ENCODE measurements at regions of chr17 and their contacts with region 1.

Region 1: DNA sequence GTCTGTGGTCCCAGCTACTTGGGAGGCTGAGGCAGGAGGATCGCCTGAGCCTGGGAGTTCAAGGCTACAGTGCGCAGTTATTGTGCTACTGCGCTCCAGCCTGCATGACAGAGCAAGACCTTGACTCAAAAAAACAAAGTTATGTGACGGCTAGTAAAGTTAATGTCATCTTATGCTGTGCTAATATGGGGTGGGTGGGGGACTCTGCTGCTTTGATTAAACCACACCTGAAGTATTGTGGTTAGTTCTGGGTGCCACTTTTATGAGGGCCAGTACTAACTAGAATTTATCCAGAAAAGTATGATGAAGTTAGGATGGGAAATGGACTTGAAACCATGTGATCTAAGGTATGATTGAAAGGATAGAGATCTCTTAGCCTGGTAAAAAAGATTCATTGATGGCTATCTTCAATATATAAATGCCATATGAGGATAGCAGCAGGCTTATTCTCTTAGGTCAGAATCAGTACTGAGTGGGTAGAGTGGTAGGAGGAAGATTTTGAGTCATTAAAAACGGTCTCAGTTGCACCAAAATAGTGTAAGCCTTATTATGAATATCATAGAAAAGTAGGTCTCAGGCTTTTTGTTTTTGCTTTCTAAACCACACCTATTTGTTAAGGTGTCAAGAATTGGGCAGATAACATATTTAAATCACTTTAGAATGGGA is 5.6 kb downstream of the WSB1 start:
- DNase-seq: no peak
- ATAC-seq: peak; percentile 11
- H3K4me3 Mint-ChIP-seq: no peak overlapping the region
- H3K27ac Mint-ChIP-seq: peak overlapping the region; percentile 9
- H3K4me1 Mint-ChIP-seq: peaks cover 52% of the 10 kb centered on the region
- H3K27me3 Mint-ChIP-seq: no peaks in the 10 kb centered on the region

Region 2: DNA sequence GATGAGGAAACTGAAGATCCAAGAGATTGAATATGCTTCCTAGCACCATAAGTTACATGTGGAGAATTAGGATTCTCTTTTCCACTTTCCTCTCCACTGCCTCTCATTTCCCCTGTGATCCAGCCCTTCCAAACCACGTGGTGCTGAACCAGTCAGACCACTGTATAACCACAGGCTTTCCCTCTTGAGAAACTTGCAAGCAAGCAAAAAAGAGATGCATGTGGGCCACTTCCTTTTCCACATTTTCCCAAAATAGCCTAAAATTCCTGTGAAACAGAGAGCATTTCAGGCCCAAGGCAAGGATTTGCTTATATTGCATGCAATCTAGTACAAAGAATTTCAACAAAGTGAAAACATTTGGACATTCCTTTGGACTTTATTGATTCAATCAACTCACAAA is 97.4 kb after region 1 on chr17:
- CTCF ChIA-PET with region 1: no interaction called
- POLR2A ChIA-PET with region 1: no interaction called
- intact Hi-C with region 1: no loop called
- DNase-seq: no peak
- ATAC-seq: no peak
- H3K4me3 Mint-ChIP-seq: no peak overlapping the region
- H3K27ac Mint-ChIP-seq: no peak overlapping the region
- H3K4me1 Mint-ChIP-seq: no peaks in the 10 kb centered on the region
- H3K27me3 Mint-ChIP-seq: peaks cover 17% of the 10 kb centered on the region

Region 3: GRCh38 chr17:27408891-27409290 is 109.4 kb after region 1 on chr17:
- CTCF ChIA-PET with region 1: no interaction called
- POLR2A ChIA-PET with region 1: no interaction called
- intact Hi-C with region 1: no loop called
- DNase-seq: no peak
- ATAC-seq: no peak
- H3K4me3 Mint-ChIP-seq: no peak overlapping the region
- H3K27ac Mint-ChIP-seq: no peak overlapping the region
- H3K4me1 Mint-ChIP-seq: no peaks in the 10 kb centered on the region
- H3K27me3 Mint-ChIP-seq: peaks cover 2% of the 10 kb centered on the region

Region 4: GRCh38 chr17:27609611-27610303 is 310.2 kb after region 1 on chr17:
- CTCF ChIA-PET with region 1: no interaction called
- POLR2A ChIA-PET with region 1: no interaction called
- intact Hi-C with region 1: loop called in 1 of 2 experiments (anchors 2 kb)
- DNase-seq: peak; percentile 47
- ATAC-seq: no peak
- H3K4me3 Mint-ChIP-seq: no peak overlapping the region
- H3K27ac Mint-ChIP-seq: no peak overlapping the region
- H3K4me1 Mint-ChIP-seq: peaks cover 21% of the 10 kb centered on the region
- H3K27me3 Mint-ChIP-seq: no peaks in the 10 kb centered on the region

Measured in activated CD4-positive, alpha-beta T cell treated with anti-CD3 and anti-CD28 coated beads for 36 hours (primary cell).